Endothelial cell of umbilical vein (primary cell): ENCODE measurements at regions of chr3 and their contacts with region 1.

Region 1: GRCh38 chr3:56801662-56802377 is at the start of gene ARHGEF3:
- DNase-seq: peak; percentile 90
- H3K4me3 ChIP-seq: peak within 1 kb of the TSS; percentile 56 to 82 (median 68)
- H3K27ac ChIP-seq: peak within 1 kb of the TSS; percentile 7
- H3K4me1 ChIP-seq: peaks cover 27% of the 10 kb centered on the region
- H3K27me3 ChIP-seq: no peaks in the 10 kb centered on the region
- CTCF ChIP-seq: peak; percentile 32 to 54
- POLR2A ChIP-seq: peak; percentile 90
- total RNA-seq, gene ARHGEF3: 11.5 and 16.3 TPM in 2 replicates

Region 2: DNA sequence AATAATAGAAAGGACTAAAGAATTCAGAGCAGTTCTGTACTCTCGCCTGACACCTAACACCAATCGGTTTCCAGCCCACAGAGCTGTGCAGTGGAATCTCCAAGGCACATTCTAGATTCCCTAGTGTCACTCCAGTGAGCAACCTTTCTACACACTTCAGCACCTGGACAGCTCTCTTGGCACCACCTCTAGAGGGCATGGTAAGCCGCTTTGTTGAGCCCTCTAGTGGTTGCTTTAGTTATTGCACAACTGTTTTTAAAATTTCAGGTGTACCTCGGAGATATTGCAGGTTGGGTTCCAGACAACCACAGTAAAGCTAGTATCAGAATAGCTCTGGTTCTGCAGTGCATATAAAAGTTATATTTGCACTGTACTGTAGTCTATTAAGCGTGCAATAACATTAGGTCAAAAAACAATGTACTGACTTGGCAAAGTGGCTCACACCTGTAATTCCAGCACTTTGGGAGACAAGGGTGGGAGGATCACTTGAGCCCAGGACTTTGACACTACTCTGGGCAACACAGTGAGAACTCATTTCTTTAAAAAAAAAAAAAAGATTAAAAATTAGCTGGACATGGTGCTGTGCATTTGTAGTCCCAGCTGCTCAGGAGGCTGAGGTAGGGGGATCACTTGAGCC is 307.0 kb before region 1 on chr3:
- CTCF ChIA-PET with region 1: no interaction called
- POLR2A ChIA-PET with region 1: no interaction called
- dilution Hi-C with region 1: no loop called
- intact Hi-C with region 1: no loop called
- DNase-seq: peak; percentile 71
- H3K4me3 ChIP-seq: no peak overlapping the region
- H3K27ac ChIP-seq: no peak overlapping the region
- H3K4me1 ChIP-seq: no peaks in the 10 kb centered on the region
- H3K27me3 ChIP-seq: peaks cover 2% of the 10 kb centered on the region in 2 experiments
- CTCF ChIP-seq: peak; percentile 90
- POLR2A ChIP-seq: no peak

Region 3: DNA sequence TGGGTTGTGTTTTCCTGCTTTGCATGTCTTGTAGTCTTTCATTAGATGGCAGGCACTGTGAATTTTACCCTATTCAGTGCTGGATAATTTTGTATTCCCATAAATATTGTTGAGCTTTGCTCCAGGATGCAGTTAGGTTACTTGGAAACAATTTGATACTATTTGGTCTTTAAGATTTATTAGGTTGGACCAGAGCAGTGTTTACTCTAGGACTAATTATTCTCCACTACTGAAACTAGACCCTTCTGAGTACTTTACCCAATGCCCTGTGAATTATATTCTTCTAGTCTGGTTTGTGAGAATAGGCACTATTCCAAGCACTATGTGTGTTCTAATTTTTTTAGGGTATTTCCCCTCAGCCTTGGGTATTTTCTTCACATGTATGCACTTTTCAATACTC is 81.0 kb before region 1 on chr3:
- CTCF ChIA-PET with region 1: interaction called, 12 read pairs
- POLR2A ChIA-PET with region 1: no interaction called
- dilution Hi-C with region 1: no loop called
- intact Hi-C with region 1: no loop called
- DNase-seq: no peak
- H3K4me3 ChIP-seq: no peak overlapping the region
- H3K27ac ChIP-seq: no peak overlapping the region
- H3K4me1 ChIP-seq: no peaks in the 10 kb centered on the region
- H3K27me3 ChIP-seq: no peaks in the 10 kb centered on the region
- CTCF ChIP-seq: no peak
- POLR2A ChIP-seq: no peak

Region 4: GRCh38 chr3:56758539-56758981 is 43.3 kb before region 1 on chr3:
- CTCF ChIA-PET with region 1: interaction called, 30 read pairs
- POLR2A ChIA-PET with region 1: no interaction called
- dilution Hi-C with region 1: no loop called
- intact Hi-C with region 1: loop called (anchors 5 kb)
- DNase-seq: peak; percentile 87
- H3K4me3 ChIP-seq: no peak overlapping the region
- H3K27ac ChIP-seq: peak overlapping the region; percentile 35
- H3K4me1 ChIP-seq: peaks cover 29% of the 10 kb centered on the region
- H3K27me3 ChIP-seq: no peaks in the 10 kb centered on the region
- CTCF ChIP-seq: no peak
- POLR2A ChIP-seq: no peak

Region 5: GRCh38 chr3:56783644-56784447 is 18.0 kb before region 1 on chr3:
- CTCF ChIA-PET with region 1: interaction called, 61 read pairs
- POLR2A ChIA-PET with region 1: no interaction called
- dilution Hi-C with region 1: no loop called
- intact Hi-C with region 1: no loop called
- DNase-seq: peak; percentile 88
- H3K4me3 ChIP-seq: peak overlapping the region in 1 of 3 experiments; percentile 27
- H3K27ac ChIP-seq: peak overlapping the region; percentile 59
- H3K4me1 ChIP-seq: peaks cover 21% of the 10 kb centered on the region
- H3K27me3 ChIP-seq: no peaks in the 10 kb centered on the region
- CTCF ChIP-seq: no peak
- POLR2A ChIP-seq: no peak

Region 6: DNA sequence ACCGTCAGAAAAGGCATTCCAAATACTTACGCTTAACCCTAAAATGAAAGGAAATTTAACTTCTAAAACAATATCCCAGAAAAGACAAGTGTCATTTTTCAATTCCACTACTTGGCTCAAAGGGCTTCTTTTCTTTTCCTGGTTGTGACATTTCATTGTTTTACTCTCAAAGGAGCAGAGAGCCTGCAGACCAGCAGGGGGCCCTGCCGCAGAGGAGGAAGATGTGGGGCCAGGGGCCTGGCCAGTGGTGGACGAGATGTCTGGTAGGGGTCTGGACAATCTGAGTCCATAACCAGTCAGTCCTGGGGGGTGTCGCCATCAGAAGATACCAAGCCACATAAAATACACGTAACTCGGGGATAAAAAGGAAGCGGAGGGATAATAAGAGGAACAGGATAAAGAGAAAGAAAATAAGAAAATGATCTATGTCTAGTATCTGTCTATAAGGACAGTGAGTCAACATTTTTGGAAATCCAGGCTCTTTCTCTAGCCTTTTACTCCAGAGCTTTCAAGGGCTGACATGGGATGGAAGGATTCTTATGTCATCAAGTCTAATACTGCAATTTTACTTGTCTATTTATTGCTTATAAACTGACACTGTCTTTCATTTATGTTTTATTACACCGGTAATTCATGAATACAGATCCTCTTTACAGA is 54.2 kb after region 1 on chr3:
- CTCF ChIA-PET with region 1: interaction called, 10 read pairs
- POLR2A ChIA-PET with region 1: no interaction called
- dilution Hi-C with region 1: no loop called
- intact Hi-C with region 1: loop called (anchors 2 kb)
- DNase-seq: peak; percentile 67
- H3K4me3 ChIP-seq: no peak overlapping the region
- H3K27ac ChIP-seq: no peak overlapping the region
- H3K4me1 ChIP-seq: peaks cover 8% of the 10 kb centered on the region
- H3K27me3 ChIP-seq: no peaks in the 10 kb centered on the region
- CTCF ChIP-seq: peak; percentile 87 to 89
- POLR2A ChIP-seq: no peak

Region 7: DNA sequence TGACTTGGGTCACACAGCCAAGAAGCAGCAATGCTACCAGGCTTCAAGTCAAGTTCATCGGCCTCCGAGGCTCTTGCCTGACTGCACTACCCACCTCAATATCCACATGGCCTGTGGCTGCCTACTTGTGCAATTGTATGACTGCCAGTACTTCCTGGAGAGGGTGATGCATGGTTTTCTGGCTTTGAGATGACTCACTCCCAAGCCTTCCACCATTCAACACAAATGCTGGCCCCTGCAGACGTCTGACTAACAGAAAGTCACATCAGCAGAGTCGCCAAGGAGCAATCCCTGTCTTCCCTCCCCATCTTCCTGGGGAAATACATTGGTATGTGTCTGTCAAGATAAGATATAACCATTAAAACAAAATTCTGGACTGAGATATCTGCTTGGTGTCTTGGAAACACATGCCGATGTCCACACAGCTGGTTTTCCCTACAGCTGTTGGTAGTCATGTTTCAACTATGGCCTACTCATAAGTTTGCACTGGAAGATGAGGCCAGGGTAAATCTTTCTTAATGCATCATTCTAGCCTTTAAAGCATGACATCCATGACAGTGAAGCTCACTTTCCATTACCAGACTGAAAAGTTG is 179.1 kb after region 1 on chr3:
- CTCF ChIA-PET with region 1: interaction called, 223 read pairs
- POLR2A ChIA-PET with region 1: no interaction called
- dilution Hi-C with region 1: no loop called
- intact Hi-C with region 1: no loop called
- DNase-seq: peak; percentile 95
- H3K4me3 ChIP-seq: no peak overlapping the region
- H3K27ac ChIP-seq: peak overlapping the region; percentile 65
- H3K4me1 ChIP-seq: peaks cover 23% of the 10 kb centered on the region
- H3K27me3 ChIP-seq: no peaks in the 10 kb centered on the region
- CTCF ChIP-seq: no peak
- POLR2A ChIP-seq: no peak